ENCODE measurements at regions of chr10 and their contacts with region 1.

Region 1: DNA sequence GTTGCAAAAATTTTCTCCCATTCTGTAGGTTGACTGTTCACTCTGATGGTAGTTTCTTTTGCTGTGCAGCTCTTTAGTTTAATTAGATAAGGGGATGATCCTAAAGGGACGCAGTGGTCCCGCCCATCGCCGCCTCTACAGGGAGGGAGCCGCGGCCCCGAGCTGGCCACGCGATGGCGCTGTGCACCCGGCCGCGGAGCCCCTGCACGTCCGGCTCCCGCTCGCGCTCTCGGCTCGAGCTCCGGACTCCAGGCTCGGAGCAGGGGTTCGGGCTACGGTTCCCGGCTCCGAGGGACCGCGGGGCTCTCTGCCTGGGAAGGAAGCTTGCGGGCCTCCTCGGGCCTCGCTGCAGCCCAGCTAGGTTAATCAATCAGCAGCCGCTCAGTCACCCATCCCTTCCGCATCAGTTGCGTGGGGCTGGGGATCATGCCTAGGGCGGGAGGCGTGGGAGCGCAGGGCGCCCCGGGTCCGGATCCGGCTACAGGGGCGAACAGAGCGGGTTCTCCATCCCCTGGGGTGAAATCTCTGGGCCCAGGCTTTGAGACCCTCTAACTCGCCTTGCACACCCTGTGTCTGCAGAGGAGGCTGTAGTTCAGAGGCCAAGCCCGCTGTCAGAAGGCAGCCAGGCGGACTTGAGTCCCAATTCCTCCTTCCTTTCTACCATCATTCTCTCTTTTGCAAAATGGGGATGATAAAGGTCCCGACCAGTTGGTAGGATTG is 97.9 kb downstream of the WDR11 start:
- DNase-seq: no peak
- H3K4me3 ChIP-seq: no peak overlapping the region
- CTCF ChIP-seq: no peak
- POLR2A ChIP-seq: no peak

Region 2: GRCh38 chr10:121608469-121609190 is 659.6 kb after region 1 on chr10:
- intact Hi-C with region 1: loop called (anchors 5 kb)
- DNase-seq: no peak
- H3K4me3 ChIP-seq: no peak overlapping the region
- CTCF ChIP-seq: no peak
- POLR2A ChIP-seq: no peak